ENCODE measurements at regions of chr10 and their contacts with region 1.

Region 1: GRCh38 chr10:110528224-110528997 is 30.7 kb downstream of the DUSP5 start:
- DNase-seq: no peak
- H3K4me3 Mint-ChIP-seq: peak overlapping the region; percentile 57
- H3K27ac Mint-ChIP-seq: peak overlapping the region; percentile 84
- H3K4me1 Mint-ChIP-seq: peaks cover 69% of the 10 kb centered on the region
- H3K27me3 Mint-ChIP-seq: no peaks in the 10 kb centered on the region

Region 2: DNA sequence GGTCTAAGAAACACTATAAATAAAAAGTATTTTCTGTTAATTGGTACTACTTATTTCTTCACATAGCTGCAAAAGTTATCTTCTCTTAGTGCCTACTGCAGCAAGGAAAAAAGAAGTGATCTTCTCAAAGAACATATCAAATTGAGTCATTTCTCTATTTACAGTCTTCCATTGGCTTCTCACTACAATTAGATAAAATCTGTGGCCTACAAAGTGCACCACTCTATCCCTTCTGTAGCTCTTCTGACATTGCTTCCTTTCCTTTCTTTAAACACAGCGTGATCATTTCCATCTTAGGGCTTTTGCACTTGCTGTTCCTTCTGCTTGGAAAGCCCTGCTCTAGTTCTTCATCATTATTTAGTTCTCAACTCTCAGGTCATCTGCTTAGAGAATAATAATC is 276.3 kb before region 1 on chr10:
- intact Hi-C with region 1: loop called (anchors 5 kb)
- DNase-seq: no peak
- H3K4me3 Mint-ChIP-seq: no peak overlapping the region
- H3K27ac Mint-ChIP-seq: peak overlapping the region; percentile 56
- H3K4me1 Mint-ChIP-seq: peaks cover 34% of the 10 kb centered on the region
- H3K27me3 Mint-ChIP-seq: peaks cover 31% of the 10 kb centered on the region

Region 3: GRCh38 chr10:110326351-110327032 is 201.9 kb before region 1 on chr10:
- intact Hi-C with region 1: loop called (anchors 1 kb)
- DNase-seq: no peak
- H3K4me3 Mint-ChIP-seq: peak overlapping the region; percentile 4
- H3K27ac Mint-ChIP-seq: peak overlapping the region; percentile 64
- H3K4me1 Mint-ChIP-seq: peaks cover 40% of the 10 kb centered on the region
- H3K27me3 Mint-ChIP-seq: no peaks in the 10 kb centered on the region

Region 4: DNA sequence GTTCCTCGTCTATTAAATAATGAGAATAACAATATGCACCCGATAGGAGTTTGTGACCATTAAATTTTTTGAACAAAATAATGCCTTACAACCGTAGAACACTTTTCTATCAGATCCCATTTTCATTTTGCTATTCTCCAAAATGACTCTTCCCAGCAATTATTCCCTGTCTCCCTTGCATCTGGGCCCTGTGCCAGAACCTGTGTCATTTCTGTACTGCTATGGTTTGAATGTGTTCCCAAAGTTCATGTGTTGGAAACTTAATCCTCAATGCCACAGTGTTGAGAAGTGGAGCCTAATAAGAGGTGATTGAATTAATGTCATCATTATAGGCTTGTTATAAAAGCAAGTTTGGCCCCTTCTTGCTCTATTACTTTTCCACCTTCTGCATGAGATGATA is 190.5 kb before region 1 on chr10:
- intact Hi-C with region 1: no loop called
- DNase-seq: no peak
- H3K4me3 Mint-ChIP-seq: no peak overlapping the region
- H3K27ac Mint-ChIP-seq: no peak overlapping the region
- H3K4me1 Mint-ChIP-seq: peaks cover 32% of the 10 kb centered on the region
- H3K27me3 Mint-ChIP-seq: peaks cover 8% of the 10 kb centered on the region

Region 5: DNA sequence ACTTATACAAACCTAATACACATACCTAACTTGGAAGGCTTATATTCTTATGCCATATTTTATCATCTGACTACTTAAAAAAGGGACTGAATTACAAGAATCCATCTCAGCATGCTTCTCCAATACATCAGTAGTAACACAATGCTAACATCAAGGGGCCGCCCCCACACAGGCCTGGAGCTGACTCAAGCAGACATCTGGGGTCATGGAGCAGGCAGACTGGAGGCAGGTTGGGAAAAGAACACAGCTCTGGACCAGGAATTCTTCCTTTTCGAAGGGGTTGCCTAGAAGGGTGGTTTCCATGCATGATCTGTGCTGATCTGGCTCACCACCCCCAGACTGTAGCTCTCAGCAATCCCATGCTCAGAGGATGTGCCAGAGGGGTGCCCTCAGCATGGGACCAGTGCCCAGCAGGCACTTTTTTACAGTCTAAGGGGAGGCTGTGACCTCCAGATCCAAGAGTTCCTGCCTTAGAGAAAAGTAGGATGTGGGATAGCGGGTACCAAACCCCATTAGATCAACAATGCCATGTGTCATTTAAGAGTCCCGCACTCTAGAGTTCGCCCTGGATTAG is 56.8 kb before region 1 on chr10:
- intact Hi-C with region 1: no loop called
- DNase-seq: no peak
- H3K4me3 Mint-ChIP-seq: no peak overlapping the region
- H3K27ac Mint-ChIP-seq: no peak overlapping the region
- H3K4me1 Mint-ChIP-seq: no peaks in the 10 kb centered on the region
- H3K27me3 Mint-ChIP-seq: no peaks in the 10 kb centered on the region

Region 6: GRCh38 chr10:110502851-110503301 is 25.5 kb before region 1 on chr10:
- intact Hi-C with region 1: loop called (anchors 1 kb)
- DNase-seq: peak; percentile 84
- H3K4me3 Mint-ChIP-seq: peak overlapping the region; percentile 99
- H3K27ac Mint-ChIP-seq: peak overlapping the region; percentile 92
- H3K4me1 Mint-ChIP-seq: peaks cover 78% of the 10 kb centered on the region
- H3K27me3 Mint-ChIP-seq: no peaks in the 10 kb centered on the region

Region 7: DNA sequence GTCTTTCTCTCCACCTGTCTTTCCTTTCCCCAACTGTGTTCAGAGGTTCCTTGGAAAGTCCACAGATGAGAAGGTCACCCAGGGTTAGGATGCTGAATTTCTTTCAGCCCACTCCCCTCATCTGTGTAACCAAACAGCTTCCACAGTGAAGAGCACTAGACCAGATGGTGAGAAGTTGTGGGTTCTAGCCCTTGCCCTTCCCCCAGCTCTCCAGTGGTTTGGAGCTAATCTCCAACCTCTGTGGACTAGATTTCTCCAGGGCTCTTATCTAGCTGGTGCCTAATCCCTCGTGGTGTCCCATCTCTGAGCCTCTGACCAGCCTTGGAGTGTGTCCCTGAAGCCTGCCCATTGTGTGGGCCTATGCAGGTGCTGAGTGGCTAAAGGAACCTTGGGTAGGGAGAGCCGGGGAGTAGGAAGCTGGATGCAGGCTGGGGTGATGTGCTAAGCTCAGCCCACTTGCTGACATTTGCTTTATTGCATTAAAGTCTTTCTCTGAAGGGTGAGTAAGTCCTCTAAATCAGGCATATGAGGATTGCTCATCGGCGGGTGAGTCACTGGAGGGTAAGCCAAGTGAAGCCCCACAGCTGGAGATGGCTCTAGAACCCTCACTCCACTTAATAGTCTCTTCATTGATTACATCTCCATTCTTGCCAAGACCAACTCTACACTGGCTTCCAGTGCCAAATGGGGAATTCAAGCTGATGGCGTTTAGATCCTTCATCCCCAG is 15.8 kb before region 1 on chr10:
- intact Hi-C with region 1: loop called (anchors 2 kb)
- DNase-seq: no peak
- H3K4me3 Mint-ChIP-seq: peak overlapping the region; percentile 55
- H3K27ac Mint-ChIP-seq: peak overlapping the region; percentile 86
- H3K4me1 Mint-ChIP-seq: peaks cover 61% of the 10 kb centered on the region
- H3K27me3 Mint-ChIP-seq: no peaks in the 10 kb centered on the region

Region 8: DNA sequence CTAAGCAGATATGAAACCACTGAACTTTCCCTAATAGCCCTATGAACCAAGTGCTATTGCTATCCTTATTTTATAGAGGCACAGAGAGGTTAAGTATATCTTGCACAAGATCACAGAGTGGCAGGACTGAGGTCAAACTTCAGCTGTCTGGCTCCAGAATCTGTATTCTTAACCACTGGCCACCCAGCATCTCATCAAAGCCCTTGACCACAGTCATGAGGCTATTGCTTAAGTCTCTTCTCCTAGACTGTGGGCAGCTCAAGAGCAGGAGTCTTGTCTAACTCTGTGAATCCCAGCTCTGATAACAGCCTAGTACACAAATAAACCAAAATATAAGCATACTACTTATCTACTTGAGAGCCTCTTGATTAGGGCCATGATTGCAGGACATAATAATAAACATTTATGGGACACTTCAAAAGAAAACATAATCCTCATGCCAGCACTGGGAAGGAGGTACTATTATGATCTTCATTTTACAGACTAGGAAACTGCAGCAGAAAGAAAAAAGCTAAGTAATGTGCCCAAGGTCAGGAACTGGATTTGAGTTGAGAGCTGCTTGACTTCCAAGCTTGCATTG is 16.6 kb after region 1 on chr10:
- intact Hi-C with region 1: no loop called
- DNase-seq: no peak
- H3K4me3 Mint-ChIP-seq: no peak overlapping the region
- H3K27ac Mint-ChIP-seq: no peak overlapping the region
- H3K4me1 Mint-ChIP-seq: peaks cover 23% of the 10 kb centered on the region
- H3K27me3 Mint-ChIP-seq: peaks cover 9% of the 10 kb centered on the region

Measured in activated CD4-positive, alpha-beta T cell treated with anti-CD3 and anti-CD28 coated beads, Interleukin-2, amount 10 ng/mL, durations not matched to agents 24 days and 14 days (primary cell).